Heart right ventricle (tissue), 16 donors: ENCODE measurements at regions of chr3 and their contacts with region 1.

Region 1: GRCh38 chr3:105032541-105032940 is 334.2 kb upstream of the ALCAM start:
- DNase-seq: no peak
- ATAC-seq: no peak
- H3K4me3 ChIP-seq: no peak overlapping the region
- H3K27ac ChIP-seq: no peak overlapping the region
- H3K4me1 ChIP-seq: no peaks in the 10 kb centered on the region
- H3K27me3 ChIP-seq: no peaks in the 10 kb centered on the region
- CTCF ChIP-seq: no peak

Region 2: DNA sequence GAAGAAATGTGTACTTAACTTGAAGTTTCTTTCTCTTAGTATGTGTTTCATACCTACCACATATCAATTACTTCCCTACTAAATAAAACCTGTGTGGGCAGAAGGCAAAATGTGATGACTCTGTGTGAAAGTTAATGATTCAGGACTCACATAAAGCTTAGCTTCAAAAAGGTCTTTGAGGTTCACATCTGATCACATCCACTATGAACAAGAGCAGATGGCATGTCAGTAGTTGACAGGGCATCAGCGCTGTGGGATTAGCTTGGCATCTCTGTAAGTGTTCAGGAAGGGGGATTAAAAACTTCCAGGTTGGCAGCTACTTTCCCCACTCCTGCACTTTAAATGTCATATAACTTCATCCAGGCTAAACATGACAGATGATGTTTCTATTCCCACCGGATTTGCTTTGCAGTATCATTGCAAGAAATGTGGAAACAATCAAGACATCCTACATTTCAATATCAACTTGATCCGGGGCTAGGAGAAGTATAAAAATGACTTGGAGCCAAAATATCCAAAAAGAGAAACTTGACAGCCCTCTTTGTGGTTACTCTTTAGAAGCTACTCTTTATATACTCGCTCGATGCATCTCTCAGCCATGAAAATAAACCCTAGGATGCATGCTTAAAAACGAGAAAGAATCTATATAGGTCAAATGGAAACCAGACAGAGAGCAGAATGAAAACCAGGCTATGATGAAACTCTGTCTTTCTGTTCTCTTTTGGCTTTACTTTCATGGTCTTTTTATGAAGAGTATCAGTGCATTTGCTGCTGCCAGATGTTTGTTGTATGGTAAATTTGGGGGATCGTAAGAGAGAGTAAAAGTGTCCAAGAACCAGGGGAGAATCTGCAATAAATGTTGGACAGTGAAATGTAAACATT is 61.1 kb after region 1 on chr3:
- intact Hi-C with region 1: loop called in 1 of 10 experiments (anchors 10 kb)
- DNase-seq: no peak
- ATAC-seq: no peak
- H3K4me3 ChIP-seq: no peak overlapping the region
- H3K27ac ChIP-seq: no peak overlapping the region
- H3K4me1 ChIP-seq: no peaks in the 10 kb centered on the region
- H3K27me3 ChIP-seq: no peaks in the 10 kb centered on the region
- CTCF ChIP-seq: no peak